GM13976 (cell line): ENCODE measurements at regions of chr2 and their contacts with region 1.

Region 1: GRCh38 chr2:231411831-231412617 is 16.5 kb downstream of the B3GNT7 start:
- DNase-seq: peak; percentile 90
- CTCF ChIP-seq: peak; percentile 89

Region 2: DNA sequence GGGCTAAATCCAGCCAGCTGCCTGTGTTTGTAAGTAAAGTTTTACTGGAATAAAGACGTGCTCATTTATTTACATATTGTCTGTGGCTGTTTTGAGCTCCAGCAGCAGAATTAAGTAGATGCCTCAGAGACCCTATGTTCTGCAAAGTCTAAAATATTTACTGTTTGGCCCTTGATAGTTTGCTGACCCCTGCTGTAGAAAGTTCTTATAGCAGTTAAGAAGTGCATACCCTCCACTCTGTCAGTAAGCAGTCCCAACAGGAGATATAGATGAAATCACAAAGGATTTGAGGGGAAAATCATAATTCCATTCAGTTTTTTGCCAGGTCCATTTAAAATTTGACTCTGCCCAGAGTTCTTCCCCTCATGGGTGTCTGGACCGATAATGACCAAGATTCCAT is 597.4 kb before region 1 on chr2:
- in situ Hi-C with region 1: no loop called
- DNase-seq: peak; percentile 56
- CTCF ChIP-seq: no peak

Region 3: DNA sequence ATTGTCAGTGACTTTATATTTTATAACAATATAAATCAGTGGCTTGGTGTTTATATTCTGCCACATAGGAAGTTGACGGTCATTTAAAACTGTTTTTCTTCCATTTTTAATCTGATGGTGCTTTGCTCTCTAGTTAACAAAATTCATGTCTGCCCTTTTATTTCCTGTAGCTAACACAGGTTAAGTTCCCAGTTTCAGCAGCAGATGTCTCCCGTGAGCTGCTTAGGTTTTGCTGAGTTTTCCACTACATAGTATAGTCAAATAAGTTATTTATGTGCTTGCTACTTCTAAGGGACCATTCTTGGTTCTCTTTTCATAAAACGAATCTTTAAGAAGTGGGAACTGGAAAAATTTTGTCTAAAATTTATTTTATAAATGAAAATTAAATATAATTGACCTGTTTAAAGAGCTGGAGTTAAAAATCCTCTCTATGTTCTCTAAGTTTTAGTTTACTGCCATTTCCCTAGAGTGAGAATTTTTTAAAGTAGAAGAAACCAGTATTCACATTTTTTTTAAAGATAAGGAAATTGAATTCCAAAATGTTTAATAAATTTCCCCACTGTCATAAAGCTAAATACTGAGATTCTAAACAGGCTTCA is 307.8 kb before region 1 on chr2:
- in situ Hi-C with region 1: loop called (anchors 10 kb)
- DNase-seq: peak; percentile 53
- CTCF ChIP-seq: peak; percentile 65

Region 4: GRCh38 chr2:231482806-231483391 is 70.9 kb after region 1 on chr2:
- in situ Hi-C with region 1: no loop called
- DNase-seq: peak; percentile 91
- CTCF ChIP-seq: peak; percentile 94

Region 5: GRCh38 chr2:231745303-231746038 is 333.4 kb after region 1 on chr2:
- in situ Hi-C with region 1: no loop called
- DNase-seq: no peak
- CTCF ChIP-seq: no peak